Posterior vena cava (tissue), 2 donors: ENCODE measurements at regions of chr3 and their contacts with region 1.

Region 1: GRCh38 chr3:32901432-32902409 is 49.7 kb upstream of the CCR4 start:
- DNase-seq: no peak

Region 2: DNA sequence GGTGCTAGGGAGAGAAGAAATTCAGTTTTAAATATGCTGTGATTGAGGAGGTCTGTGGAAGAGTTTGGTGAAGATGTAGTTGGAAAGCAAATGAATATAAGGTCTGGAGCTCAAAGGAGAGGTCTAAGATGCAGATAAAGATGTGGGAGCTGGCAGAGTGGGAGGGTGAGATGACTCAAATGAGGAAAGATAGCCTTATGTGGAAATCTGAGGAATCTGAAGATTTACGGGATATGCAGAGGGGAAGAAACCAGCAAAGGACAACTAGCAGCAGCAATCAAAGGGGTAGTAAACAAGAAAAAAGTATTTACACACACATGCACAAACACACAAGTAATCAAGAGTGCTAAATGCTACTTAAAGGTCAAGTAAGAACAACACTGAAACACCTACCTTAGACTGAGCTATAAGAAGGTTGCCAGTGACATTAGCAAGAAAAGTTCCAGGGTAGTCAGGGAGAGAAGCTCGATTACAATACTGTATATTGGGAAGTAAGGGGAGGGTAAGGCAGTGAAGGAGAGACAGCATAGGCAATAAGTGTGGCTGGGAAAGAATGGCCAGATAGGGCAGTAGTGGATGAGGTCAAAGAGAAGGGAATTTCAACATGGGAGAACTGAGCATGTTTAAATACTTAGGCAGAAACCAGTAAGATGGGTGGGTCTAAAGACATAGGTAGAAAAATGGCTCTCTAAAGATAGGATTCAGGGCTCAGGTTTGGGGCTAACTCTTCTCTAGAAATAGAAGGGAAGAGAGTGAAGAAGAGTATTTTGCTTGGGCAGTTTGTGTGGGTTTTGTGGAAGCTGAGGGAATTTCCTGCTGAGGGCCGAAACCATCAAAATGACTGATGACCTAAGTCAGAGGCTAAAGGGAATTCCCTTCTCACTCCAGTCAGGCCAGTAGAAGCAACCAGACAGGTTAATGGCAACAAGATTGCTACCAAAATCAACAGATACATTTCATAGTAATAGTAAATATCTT is 408.0 kb before region 1 on chr3:
- intact Hi-C with region 1: no loop called
- DNase-seq: no peak

Region 3: GRCh38 chr3:32873531-32874130 is 28.1 kb before region 1 on chr3:
- intact Hi-C with region 1: loop called in 1 of 2 experiments (anchors 2 kb)
- DNase-seq: no peak

Region 4: DNA sequence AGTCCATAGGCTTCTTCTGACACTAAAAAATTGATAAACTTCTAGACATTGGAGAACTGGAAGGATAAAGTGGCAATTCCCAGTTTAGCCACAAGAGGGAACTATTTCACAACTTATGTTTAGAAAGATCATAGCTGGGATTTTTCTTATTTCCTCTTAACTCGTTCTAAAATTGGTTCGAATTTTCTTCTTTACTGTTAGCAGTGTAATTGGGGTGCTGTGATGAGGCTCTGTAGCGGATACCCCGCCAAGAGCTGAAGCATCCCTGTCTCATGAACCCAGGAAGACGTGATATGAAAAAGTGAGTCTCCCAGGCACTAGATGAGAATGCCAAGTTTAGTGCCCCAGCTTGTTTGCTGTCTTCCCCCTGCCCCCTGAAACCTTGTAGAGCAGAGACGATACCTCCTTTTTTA is 981.8 kb after region 1 on chr3:
- intact Hi-C with region 1: no loop called
- DNase-seq: no peak